Activated B cell treated with CpG ODN at 0.5 μM for 24 hours (primary cell): ENCODE measurements at regions of chr11 and their contacts with region 1.

Region 1: GRCh38 chr11:93543292-93543977 is at the start of gene SMCO4:
- DNase-seq: peak; percentile 62
- ATAC-seq: peak; percentile 77
- H3K4me3 Mint-ChIP-seq: peak within 1 kb of the TSS; percentile 90
- H3K27ac Mint-ChIP-seq: peak within 1 kb of the TSS; percentile 56
- H3K4me1 Mint-ChIP-seq: peaks cover 13% of the 10 kb centered on the region
- H3K27me3 Mint-ChIP-seq: peaks cover 4% of the 10 kb centered on the region
- CTCF ChIP-seq: no peak
- total RNA-seq, gene SMCO4: 3.2 and 4.6 TPM in 2 replicates

Region 2: GRCh38 chr11:93234602-93235207 is 308.7 kb before region 1 on chr11:
- CTCF ChIA-PET with region 1: interaction called, 33 read pairs
- POLR2A ChIA-PET with region 1: no interaction called
- intact Hi-C with region 1: loop called (anchors 1 kb)
- DNase-seq: peak; percentile 49
- ATAC-seq: peak; percentile 97
- H3K4me3 Mint-ChIP-seq: no peak overlapping the region
- H3K27ac Mint-ChIP-seq: no peak overlapping the region
- H3K4me1 Mint-ChIP-seq: no peaks in the 10 kb centered on the region
- H3K27me3 Mint-ChIP-seq: peaks cover 20% of the 10 kb centered on the region
- CTCF ChIP-seq: peak; percentile 73

Region 3: DNA sequence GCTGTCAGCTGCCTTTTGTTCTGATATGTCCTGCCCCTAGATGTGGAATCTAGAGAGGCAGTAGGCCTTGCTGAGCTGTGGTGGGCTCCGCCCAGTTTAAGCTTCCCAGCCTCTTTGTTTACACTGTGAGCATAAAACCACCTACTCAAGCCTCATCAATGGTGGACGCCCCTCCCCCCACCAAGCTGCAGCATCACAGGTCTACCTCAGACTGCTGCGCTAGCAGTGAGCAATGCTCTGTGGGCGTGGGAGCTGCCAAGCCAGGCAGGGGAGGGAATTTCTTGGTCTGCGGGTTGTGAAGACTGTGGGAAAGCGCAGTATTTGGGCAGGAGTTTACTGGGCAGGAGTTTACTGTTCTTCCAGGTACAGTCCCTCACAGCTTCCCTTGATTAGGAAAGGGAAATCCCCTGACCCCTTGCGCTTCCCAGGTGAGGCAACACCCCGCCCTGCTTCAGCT is 98.8 kb before region 1 on chr11:
- CTCF ChIA-PET with region 1: no interaction called
- POLR2A ChIA-PET with region 1: no interaction called
- intact Hi-C with region 1: no loop called
- DNase-seq: no peak
- ATAC-seq: no peak
- H3K4me3 Mint-ChIP-seq: no peak overlapping the region
- H3K27ac Mint-ChIP-seq: no peak overlapping the region
- H3K4me1 Mint-ChIP-seq: no peaks in the 10 kb centered on the region
- H3K27me3 Mint-ChIP-seq: peaks cover 11% of the 10 kb centered on the region
- CTCF ChIP-seq: no peak

Region 4: DNA sequence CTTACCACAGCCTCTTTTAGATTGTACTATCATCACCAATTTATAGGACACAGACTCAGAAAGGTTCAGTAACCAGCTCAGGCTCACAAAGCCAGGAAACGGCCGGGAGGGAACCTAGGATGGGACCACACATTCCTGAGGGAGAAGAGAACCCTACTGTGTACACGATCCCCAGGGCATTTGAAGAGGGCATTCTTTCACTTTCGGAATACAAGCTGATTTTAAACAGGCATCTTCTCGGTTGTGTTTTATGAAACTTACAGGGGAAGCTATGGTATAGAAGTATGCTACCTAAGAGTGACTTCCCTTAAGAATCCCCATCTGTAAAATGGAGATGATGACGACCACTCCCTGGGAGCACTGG is 19.3 kb before region 1 on chr11:
- CTCF ChIA-PET with region 1: interaction called, 10 read pairs
- POLR2A ChIA-PET with region 1: interaction called, 12 read pairs
- intact Hi-C with region 1: no loop called
- DNase-seq: no peak
- ATAC-seq: peak; percentile 20
- H3K4me3 Mint-ChIP-seq: peak overlapping the region; percentile 65
- H3K27ac Mint-ChIP-seq: peak overlapping the region; percentile 79
- H3K4me1 Mint-ChIP-seq: peaks cover 58% of the 10 kb centered on the region
- H3K27me3 Mint-ChIP-seq: no peaks in the 10 kb centered on the region
- CTCF ChIP-seq: no peak